ENCODE measurements at regions of chr4 and their contacts with region 1.

Region 1: DNA sequence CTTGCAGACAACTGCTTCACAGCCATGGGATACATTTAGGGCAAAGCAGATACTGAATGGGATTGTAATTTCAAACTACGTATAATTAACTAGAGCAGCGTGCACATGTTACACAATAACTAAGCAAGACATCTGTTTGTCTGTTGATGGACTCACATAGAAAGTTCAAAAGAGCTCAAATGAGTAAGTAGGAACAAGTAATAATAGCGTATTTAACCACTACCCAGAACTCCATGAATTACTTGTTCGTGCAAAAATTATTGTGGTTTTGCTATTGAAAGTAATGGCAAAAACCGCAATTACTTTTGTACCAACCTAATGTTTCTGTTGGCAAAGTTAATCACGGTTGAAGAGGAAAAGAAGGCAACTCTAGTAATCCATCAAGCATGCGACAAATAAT is 825.4 kb downstream of the PCDH18 start:
- DNase-seq: no peak
- ATAC-seq: no peak
- H3K4me3 ChIP-seq: no peak overlapping the region
- H3K4me3 Mint-ChIP-seq: no peak overlapping the region
- H3K27ac ChIP-seq: no peak overlapping the region
- H3K27ac Mint-ChIP-seq: no peak overlapping the region
- H3K4me1 ChIP-seq: no peaks in the 10 kb centered on the region
- H3K4me1 Mint-ChIP-seq: no peaks in the 10 kb centered on the region
- H3K27me3 ChIP-seq: no peaks in the 10 kb centered on the region
- H3K27me3 Mint-ChIP-seq: no peaks in the 10 kb centered on the region

Region 2: GRCh38 chr4:136219592-136220125 is 487.3 kb before region 1 on chr4:
- CTCF ChIA-PET with region 1: no interaction called
- POLR2A ChIA-PET with region 1: interaction called in 1 of 2 experiments, 19 read pairs
- DNase-seq: no peak
- ATAC-seq: peak in 1 of 4 experiments; percentile 16
- H3K4me3 ChIP-seq: no peak overlapping the region
- H3K4me3 Mint-ChIP-seq: no peak overlapping the region
- H3K27ac ChIP-seq: no peak overlapping the region
- H3K27ac Mint-ChIP-seq: no peak overlapping the region
- H3K4me1 ChIP-seq: no peaks in the 10 kb centered on the region
- H3K4me1 Mint-ChIP-seq: no peaks in the 10 kb centered on the region
- H3K27me3 ChIP-seq: no peaks in the 10 kb centered on the region
- H3K27me3 Mint-ChIP-seq: no peaks in the 10 kb centered on the region

Region 3: GRCh38 chr4:136725286-136726081 is 18.5 kb after region 1 on chr4:
- CTCF ChIA-PET with region 1: no interaction called
- POLR2A ChIA-PET with region 1: no interaction called
- DNase-seq: no peak
- ATAC-seq: no peak
- H3K4me3 ChIP-seq: no peak overlapping the region
- H3K4me3 Mint-ChIP-seq: no peak overlapping the region
- H3K27ac ChIP-seq: no peak overlapping the region
- H3K27ac Mint-ChIP-seq: no peak overlapping the region
- H3K4me1 ChIP-seq: no peaks in the 10 kb centered on the region
- H3K4me1 Mint-ChIP-seq: no peaks in the 10 kb centered on the region
- H3K27me3 ChIP-seq: no peaks in the 10 kb centered on the region
- H3K27me3 Mint-ChIP-seq: no peaks in the 10 kb centered on the region

Measured in T-cell (primary cell).